Activated T-helper 1 cell treated with anti-CD3 and anti-CD28 coated beads, Interleukin-12 subunit alpha, Interleukin-12 subunit beta, Interleukin-2, Interleukin-4 antibody, amounts not matched to agents 30 ng/mL and 10 ng/mL and 1 ng/mL, durations not matched to agents 14 hours and 24 hours and 36 hours (primary cell): ENCODE measurements at regions of chr6 and their contacts with region 1.

Region 1: GRCh38 chr6:90121982-90122381 is 174.7 kb downstream of the BACH2 start:
- DNase-seq: no peak
- H3K4me3 Mint-ChIP-seq: peak overlapping the region; percentile 24
- H3K27ac Mint-ChIP-seq: peak overlapping the region; percentile 84
- H3K4me1 Mint-ChIP-seq: peaks cover 61% of the 10 kb centered on the region
- H3K27me3 Mint-ChIP-seq: peaks cover 2% of the 10 kb centered on the region

Region 2: GRCh38 chr6:90110971-90111370 is 11.0 kb before region 1 on chr6:
- intact Hi-C with region 1: loop called (anchors 1 kb)
- DNase-seq: peak; percentile 43
- H3K4me3 Mint-ChIP-seq: no peak overlapping the region
- H3K27ac Mint-ChIP-seq: peak overlapping the region; percentile 72
- H3K4me1 Mint-ChIP-seq: peaks cover 66% of the 10 kb centered on the region
- H3K27me3 Mint-ChIP-seq: no peaks in the 10 kb centered on the region